ENCODE measurements at regions of chr18 and their contacts with region 1.

Region 1: GRCh38 chr18:49510393-49511115 is 23.5 kb upstream of the C18orf32 start:
- DNase-seq: peak; percentile 21 to 79 (median 37)
- ATAC-seq: peak; percentile 68
- H3K4me3 ChIP-seq: no peak overlapping the region
- H3K4me3 Mint-ChIP-seq: no peak overlapping the region
- H3K27ac ChIP-seq: no peak overlapping the region
- H3K27ac Mint-ChIP-seq: no peak overlapping the region
- H3K4me1 ChIP-seq: peaks cover 3% of the 10 kb centered on the region
- H3K4me1 Mint-ChIP-seq: no peaks in the 10 kb centered on the region
- H3K27me3 ChIP-seq: no peaks in the 10 kb centered on the region
- H3K27me3 Mint-ChIP-seq: peaks cover 27% of the 10 kb centered on the region
- CTCF ChIP-seq: peak; percentile 82

Region 2: GRCh38 chr18:49612515-49613033 is 102.0 kb after region 1 on chr18:
- CTCF ChIA-PET with region 1: no interaction called
- POLR2A ChIA-PET with region 1: no interaction called
- intact Hi-C with region 1: no loop called
- DNase-seq: no peak
- ATAC-seq: no peak
- H3K4me3 ChIP-seq: no peak overlapping the region
- H3K4me3 Mint-ChIP-seq: no peak overlapping the region
- H3K27ac ChIP-seq: no peak overlapping the region
- H3K27ac Mint-ChIP-seq: no peak overlapping the region
- H3K4me1 ChIP-seq: no peaks in the 10 kb centered on the region
- H3K4me1 Mint-ChIP-seq: no peaks in the 10 kb centered on the region
- H3K27me3 ChIP-seq: no peaks in the 10 kb centered on the region
- H3K27me3 Mint-ChIP-seq: no peaks in the 10 kb centered on the region
- CTCF ChIP-seq: no peak

Region 3: DNA sequence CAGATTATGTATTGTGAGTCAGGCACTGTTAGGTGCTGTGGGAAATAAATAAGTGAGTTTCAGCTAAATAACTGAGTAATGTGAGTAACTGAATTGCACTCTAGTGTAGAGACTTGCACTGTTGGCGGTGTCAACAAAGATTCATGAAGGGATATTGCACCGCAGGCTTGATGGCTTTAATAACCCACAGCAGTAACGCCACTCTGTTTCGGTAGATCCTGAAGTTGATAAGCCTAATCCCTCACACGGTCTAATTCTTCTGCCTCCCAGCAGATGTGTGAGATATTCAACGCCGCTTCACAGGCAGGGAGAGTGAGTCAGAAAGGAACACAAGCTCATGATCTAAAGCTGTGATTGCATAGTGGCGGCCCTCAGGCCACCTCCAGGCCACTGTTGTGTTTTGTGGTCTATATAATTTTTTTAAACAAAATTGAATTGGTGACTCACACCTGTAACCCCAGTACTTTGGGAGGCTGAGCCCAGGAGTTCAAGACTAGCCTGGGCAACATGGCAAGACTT is 145.6 kb after region 1 on chr18:
- CTCF ChIA-PET with region 1: no interaction called
- POLR2A ChIA-PET with region 1: no interaction called
- intact Hi-C with region 1: no loop called
- DNase-seq: no peak
- ATAC-seq: no peak
- H3K4me3 ChIP-seq: no peak overlapping the region
- H3K4me3 Mint-ChIP-seq: no peak overlapping the region
- H3K27ac ChIP-seq: no peak overlapping the region
- H3K27ac Mint-ChIP-seq: no peak overlapping the region
- H3K4me1 ChIP-seq: no peaks in the 10 kb centered on the region
- H3K4me1 Mint-ChIP-seq: peaks cover 5% of the 10 kb centered on the region
- H3K27me3 ChIP-seq: no peaks in the 10 kb centered on the region
- H3K27me3 Mint-ChIP-seq: no peaks in the 10 kb centered on the region
- CTCF ChIP-seq: no peak

Region 4: GRCh38 chr18:49768051-49768391 is 257.5 kb after region 1 on chr18:
- CTCF ChIA-PET with region 1: no interaction called
- POLR2A ChIA-PET with region 1: no interaction called
- intact Hi-C with region 1: loop called in 1 of 2 experiments (anchors 5 kb)
- DNase-seq: peak in 2 of 14 experiments; percentile 26 to 40
- ATAC-seq: no peak
- H3K4me3 ChIP-seq: no peak overlapping the region
- H3K4me3 Mint-ChIP-seq: no peak overlapping the region
- H3K27ac ChIP-seq: no peak overlapping the region
- H3K27ac Mint-ChIP-seq: no peak overlapping the region
- H3K4me1 ChIP-seq: no peaks in the 10 kb centered on the region
- H3K4me1 Mint-ChIP-seq: peaks cover 6% of the 10 kb centered on the region
- H3K27me3 ChIP-seq: no peaks in the 10 kb centered on the region
- H3K27me3 Mint-ChIP-seq: no peaks in the 10 kb centered on the region
- CTCF ChIP-seq: no peak

Region 5: GRCh38 chr18:49858309-49859020 is 347.9 kb after region 1 on chr18:
- CTCF ChIA-PET with region 1: interaction called, 42 read pairs
- POLR2A ChIA-PET with region 1: interaction called, 3 read pairs
- intact Hi-C with region 1: loop called (anchors 1 kb)
- DNase-seq: peak; percentile 24 to 74 (median 48)
- ATAC-seq: no peak
- H3K4me3 ChIP-seq: no peak overlapping the region
- H3K4me3 Mint-ChIP-seq: no peak overlapping the region
- H3K27ac ChIP-seq: no peak overlapping the region
- H3K27ac Mint-ChIP-seq: no peak overlapping the region
- H3K4me1 ChIP-seq: peaks cover 9% of the 10 kb centered on the region
- H3K4me1 Mint-ChIP-seq: no peaks in the 10 kb centered on the region
- H3K27me3 ChIP-seq: no peaks in the 10 kb centered on the region
- H3K27me3 Mint-ChIP-seq: no peaks in the 10 kb centered on the region
- CTCF ChIP-seq: peak; percentile 85

Region 6: GRCh38 chr18:50194631-50195532 is 684.3 kb after region 1 on chr18 and contains the start of gene MYO5B:
- CTCF ChIA-PET with region 1: no interaction called
- POLR2A ChIA-PET with region 1: no interaction called
- intact Hi-C with region 1: loop called in 1 of 2 experiments (anchors 5 kb)
- DNase-seq: peak in 13 of 14 experiments; percentile 2 to 74 (median 37)
- ATAC-seq: peak; percentile 76
- H3K4me3 ChIP-seq: no peak within 1 kb of the TSS
- H3K4me3 Mint-ChIP-seq: peak within 1 kb of the TSS; percentile 69
- H3K27ac ChIP-seq: no peak within 1 kb of the TSS
- H3K27ac Mint-ChIP-seq: no peak within 1 kb of the TSS
- H3K4me1 ChIP-seq: peaks cover 24% of the 10 kb centered on the region
- H3K4me1 Mint-ChIP-seq: peaks cover 28% of the 10 kb centered on the region
- H3K27me3 ChIP-seq: peaks cover 38 to 70% of the 10 kb centered on the region in 2 experiments
- H3K27me3 Mint-ChIP-seq: peaks cover 79% of the 10 kb centered on the region
- CTCF ChIP-seq: no peak
- total RNA-seq, gene MYO5B: not detected

Region 7: DNA sequence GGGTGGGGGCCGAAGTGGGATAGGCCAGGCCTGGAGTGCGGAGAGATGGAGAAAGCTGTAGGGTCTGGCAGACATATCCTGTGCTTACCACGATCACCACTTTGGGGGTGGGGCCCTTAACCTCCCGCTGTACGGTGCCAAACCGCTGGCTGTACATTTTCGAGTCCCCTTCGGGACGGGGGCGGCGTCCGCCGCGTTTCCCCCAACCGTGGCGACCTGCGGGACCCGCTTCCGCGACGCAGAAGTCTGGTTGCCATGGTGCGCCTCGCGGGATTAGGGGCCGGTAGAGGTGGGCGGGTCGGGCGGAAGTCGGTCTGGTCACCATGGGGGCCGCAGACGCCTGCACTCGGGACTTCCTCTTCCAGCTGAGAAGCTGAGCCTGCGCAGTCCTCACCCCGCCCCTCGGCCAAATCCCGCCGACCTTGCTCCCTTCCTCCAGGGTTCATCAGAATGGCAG is 755.7 kb after region 1 on chr18 and contains the start of gene CFAP53:
- CTCF ChIA-PET with region 1: no interaction called
- POLR2A ChIA-PET with region 1: no interaction called
- intact Hi-C with region 1: loop called in 1 of 2 experiments (anchors 2 kb)
- DNase-seq: peak in 13 of 14 experiments; percentile 54 to 92 (median 80)
- ATAC-seq: peak; percentile 77
- H3K4me3 ChIP-seq: peak within 1 kb of the TSS; percentile 66
- H3K4me3 Mint-ChIP-seq: peak within 1 kb of the TSS; percentile 93
- H3K27ac ChIP-seq: peak within 1 kb of the TSS; percentile 13 to 64
- H3K27ac Mint-ChIP-seq: peak within 1 kb of the TSS; percentile 45
- H3K4me1 ChIP-seq: peaks cover 25% of the 10 kb centered on the region
- H3K4me1 Mint-ChIP-seq: peaks cover 30% of the 10 kb centered on the region
- H3K27me3 ChIP-seq: no peaks in the 10 kb centered on the region
- H3K27me3 Mint-ChIP-seq: no peaks in the 10 kb centered on the region
- CTCF ChIP-seq: no peak
- total RNA-seq, gene CFAP53: 0.33 to 0.47 TPM